PC-9 (cell line): ENCODE measurements at regions of chr1 and their contacts with region 1.

Region 1: GRCh38 chr1:185317034-185317885 is at the start of gene IVNS1ABP:
- DNase-seq: peak; percentile 91 to 95
- H3K4me3 ChIP-seq: peak within 1 kb of the TSS; percentile 97
- H3K27ac ChIP-seq: peak within 1 kb of the TSS; percentile 94
- H3K4me1 ChIP-seq: peaks cover 37% of the 10 kb centered on the region
- H3K27me3 ChIP-seq: no peaks in the 10 kb centered on the region
- CTCF ChIP-seq: peak; percentile 33; the same call in 1 of the 2 replicates
- total RNA-seq, gene IVNS1ABP: 38.8 and 44.3 TPM in 2 replicates

Region 2: DNA sequence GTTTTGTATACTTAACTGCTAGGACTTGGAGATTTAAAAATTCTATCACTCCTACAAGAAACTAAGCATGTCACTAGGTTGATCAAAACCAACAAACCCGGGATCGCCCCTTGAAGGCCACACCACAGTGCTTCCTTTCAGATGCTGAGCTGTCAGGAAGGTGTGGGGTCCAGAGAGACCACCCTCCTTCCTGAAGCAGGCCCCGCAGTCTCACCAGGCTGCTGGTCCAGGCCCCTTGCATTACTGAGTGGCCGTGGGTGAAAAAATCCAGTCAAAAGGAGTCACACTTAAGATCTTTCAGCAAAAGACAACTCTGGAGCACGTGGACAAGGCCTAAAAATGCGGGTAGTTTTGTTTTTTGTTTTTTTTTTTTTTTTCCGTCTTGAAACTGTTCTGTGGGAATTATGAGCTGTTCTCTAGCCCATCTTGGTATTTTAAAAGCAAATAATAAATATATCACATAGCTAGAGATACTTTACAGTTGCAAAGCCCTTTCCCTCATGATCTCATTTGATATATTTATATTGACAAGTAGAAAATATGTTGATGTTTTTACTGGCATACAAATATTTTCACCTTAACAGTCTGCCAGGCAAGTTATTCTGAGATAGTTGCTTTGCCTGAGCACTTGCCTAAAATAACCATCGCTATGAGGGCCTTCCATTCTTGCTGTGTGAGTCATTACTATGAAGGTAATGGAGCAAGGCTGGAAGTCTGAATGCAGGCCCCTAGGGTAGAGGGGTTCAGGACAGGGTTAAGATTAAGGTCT is 489.5 kb before region 1 on chr1:
- CTCF ChIA-PET with region 1: no interaction called
- POLR2A ChIA-PET with region 1: interaction called, 13 read pairs
- intact Hi-C with region 1: no loop called
- DNase-seq: peak; percentile 45 to 87
- H3K4me3 ChIP-seq: no peak overlapping the region
- H3K27ac ChIP-seq: peak overlapping the region; percentile 72
- H3K4me1 ChIP-seq: peaks cover 23% of the 10 kb centered on the region
- H3K27me3 ChIP-seq: no peaks in the 10 kb centered on the region
- CTCF ChIP-seq: no peak

Region 3: GRCh38 chr1:185338719-185339622 is 21.7 kb after region 1 on chr1:
- CTCF ChIA-PET with region 1: no interaction called
- POLR2A ChIA-PET with region 1: no interaction called
- intact Hi-C with region 1: no loop called
- DNase-seq: no peak
- H3K4me3 ChIP-seq: no peak overlapping the region
- H3K27ac ChIP-seq: no peak overlapping the region
- H3K4me1 ChIP-seq: no peaks in the 10 kb centered on the region
- H3K27me3 ChIP-seq: no peaks in the 10 kb centered on the region
- CTCF ChIP-seq: no peak

Region 4: DNA sequence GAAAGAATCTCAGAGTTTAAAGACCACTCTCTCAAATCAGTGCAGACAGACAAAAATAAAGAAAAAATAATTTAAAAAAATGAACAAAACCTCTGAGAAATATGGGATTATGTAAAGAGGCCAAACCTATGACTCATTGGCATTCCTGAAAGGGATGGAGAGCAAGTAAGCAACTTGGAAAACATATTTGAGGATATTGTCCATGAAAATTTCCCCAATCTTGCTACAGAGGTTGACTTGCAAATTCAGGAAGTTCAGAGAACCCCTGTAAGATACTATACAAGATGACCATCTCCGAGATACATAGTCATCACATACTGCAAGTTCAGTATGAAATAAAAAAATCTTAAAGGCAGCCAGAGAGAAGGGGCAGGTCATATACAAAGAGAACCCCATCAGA is 43.5 kb after region 1 on chr1:
- CTCF ChIA-PET with region 1: no interaction called
- POLR2A ChIA-PET with region 1: interaction called, 16 read pairs
- intact Hi-C with region 1: no loop called
- DNase-seq: no peak
- H3K4me3 ChIP-seq: no peak overlapping the region
- H3K27ac ChIP-seq: no peak overlapping the region
- H3K4me1 ChIP-seq: no peaks in the 10 kb centered on the region
- H3K27me3 ChIP-seq: no peaks in the 10 kb centered on the region
- CTCF ChIP-seq: no peak

Region 5: GRCh38 chr1:185439727-185440415 is 122.6 kb after region 1 on chr1:
- CTCF ChIA-PET with region 1: interaction called, 3 read pairs
- POLR2A ChIA-PET with region 1: interaction called, 7 read pairs
- intact Hi-C with region 1: loop called (anchors 1 kb)
- DNase-seq: peak; percentile 70 to 86
- H3K4me3 ChIP-seq: no peak overlapping the region
- H3K27ac ChIP-seq: 0 out of 2 replicates have a peak overlapping the region, but pooled peaks have one; percentile 2
- H3K4me1 ChIP-seq: peaks cover 16% of the 10 kb centered on the region
- H3K27me3 ChIP-seq: no peaks in the 10 kb centered on the region
- CTCF ChIP-seq: no peak

Region 6: GRCh38 chr1:185595835-185596667 is 278.8 kb after region 1 on chr1:
- CTCF ChIA-PET with region 1: interaction called, 4 read pairs
- POLR2A ChIA-PET with region 1: interaction called, 3 read pairs
- intact Hi-C with region 1: loop called (anchors 2 kb)
- DNase-seq: peak in 1 of 2 experiments; percentile 52
- H3K4me3 ChIP-seq: no peak overlapping the region
- H3K27ac ChIP-seq: no peak overlapping the region
- H3K4me1 ChIP-seq: no peaks in the 10 kb centered on the region
- H3K27me3 ChIP-seq: no peaks in the 10 kb centered on the region
- CTCF ChIP-seq: peak; percentile 82

Region 7: DNA sequence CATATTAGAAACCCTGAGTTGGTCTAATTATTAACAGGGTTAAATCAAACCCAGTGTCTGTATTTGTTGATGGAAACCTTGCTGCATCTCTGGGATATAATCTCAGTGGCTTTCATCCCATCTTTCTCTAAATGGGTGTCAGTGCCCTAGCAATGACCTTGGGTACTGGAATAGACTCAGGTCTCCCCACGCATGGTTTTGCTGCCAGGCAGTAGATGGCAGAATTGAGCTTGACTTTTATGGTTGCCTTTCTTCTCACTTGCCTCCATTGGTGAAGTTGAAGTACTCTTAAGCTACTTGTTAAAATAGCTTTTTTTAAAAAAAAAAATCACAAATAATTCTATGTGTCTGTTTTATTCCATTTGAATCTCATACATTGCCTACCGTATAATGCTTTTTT is 335.1 kb after region 1 on chr1:
- CTCF ChIA-PET with region 1: no interaction called
- POLR2A ChIA-PET with region 1: interaction called, 14 read pairs
- intact Hi-C with region 1: no loop called
- DNase-seq: no peak
- H3K4me3 ChIP-seq: no peak overlapping the region
- H3K27ac ChIP-seq: no peak overlapping the region
- H3K4me1 ChIP-seq: no peaks in the 10 kb centered on the region
- H3K27me3 ChIP-seq: no peaks in the 10 kb centered on the region
- CTCF ChIP-seq: no peak; the same call in 1 of the 2 replicates

Region 8: DNA sequence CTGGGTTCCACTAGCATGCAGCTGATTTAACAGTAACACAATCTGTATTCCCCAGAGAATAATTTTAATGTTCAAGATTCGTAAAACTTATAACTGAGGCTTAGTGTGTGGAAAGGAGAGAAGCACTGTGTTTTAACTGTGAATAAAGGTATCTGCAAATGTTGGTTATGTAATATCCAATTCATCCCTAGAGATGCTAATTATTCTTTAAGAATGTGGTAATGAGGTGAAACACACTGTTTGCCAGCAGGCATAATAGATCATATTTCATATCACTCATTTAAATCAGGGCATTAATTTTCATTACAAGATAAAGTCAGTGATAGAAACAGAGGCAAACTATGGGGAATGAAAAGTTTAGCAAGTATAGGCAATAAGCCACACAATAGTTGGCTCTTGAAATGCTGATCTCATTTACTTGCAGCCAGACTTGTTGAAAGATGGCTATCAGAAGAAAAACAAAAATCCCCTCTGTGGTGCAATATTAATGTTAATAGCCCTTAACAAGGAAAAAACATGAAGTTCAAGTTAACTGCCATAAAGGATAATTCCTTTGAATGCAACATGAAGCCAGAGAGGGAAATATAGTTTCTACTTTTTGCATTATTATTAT is 450.4 kb after region 1 on chr1:
- CTCF ChIA-PET with region 1: no interaction called
- POLR2A ChIA-PET with region 1: no interaction called
- intact Hi-C with region 1: no loop called
- DNase-seq: no peak
- H3K4me3 ChIP-seq: no peak overlapping the region
- H3K27ac ChIP-seq: no peak overlapping the region
- H3K4me1 ChIP-seq: no peaks in the 10 kb centered on the region
- H3K27me3 ChIP-seq: no peaks in the 10 kb centered on the region
- CTCF ChIP-seq: no peak

Region 9: DNA sequence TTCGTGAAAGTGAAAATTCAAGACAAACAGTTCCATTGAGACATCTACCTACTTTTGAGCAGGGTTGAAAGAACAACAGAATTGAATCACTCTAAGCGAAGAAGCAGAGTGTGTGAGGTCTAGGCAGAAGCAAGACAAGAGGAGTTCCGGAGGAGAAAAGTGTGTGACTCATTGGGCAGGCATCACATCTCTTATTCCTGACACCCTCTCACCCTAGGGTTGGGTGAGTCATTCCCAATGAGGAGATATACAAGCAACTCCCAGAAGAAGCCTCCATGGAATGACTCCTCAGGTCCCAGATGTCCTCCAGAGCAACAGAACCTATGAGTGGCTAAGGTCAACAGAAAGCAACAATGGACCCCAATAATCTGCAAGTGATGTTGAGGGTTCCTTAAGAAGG is 919.7 kb after region 1 on chr1:
- CTCF ChIA-PET with region 1: no interaction called
- POLR2A ChIA-PET with region 1: no interaction called
- intact Hi-C with region 1: loop called (anchors 10 kb)
- DNase-seq: peak; percentile 43 to 66
- H3K4me3 ChIP-seq: no peak overlapping the region
- H3K27ac ChIP-seq: 0 out of 2 replicates have a peak overlapping the region, but pooled peaks have one; percentile 4
- H3K4me1 ChIP-seq: peaks cover 16% of the 10 kb centered on the region
- H3K27me3 ChIP-seq: no peaks in the 10 kb centered on the region
- CTCF ChIP-seq: no peak